Psoas muscle (tissue), 8 donors: ENCODE measurements at regions of chr2 and their contacts with region 1.

Region 1: GRCh38 chr2:204691911-204692510 is 146.7 kb downstream of the PARD3B start:
- DNase-seq: no peak
- ATAC-seq: peak; percentile 86 to 98 (median 91)
- H3K4me3 ChIP-seq: no peak overlapping the region
- H3K27ac ChIP-seq: no peak overlapping the region
- H3K4me1 ChIP-seq: peaks cover 12% of the 10 kb centered on the region
- H3K27me3 ChIP-seq: no peaks in the 10 kb centered on the region
- CTCF ChIP-seq: peak; percentile 80

Region 2: DNA sequence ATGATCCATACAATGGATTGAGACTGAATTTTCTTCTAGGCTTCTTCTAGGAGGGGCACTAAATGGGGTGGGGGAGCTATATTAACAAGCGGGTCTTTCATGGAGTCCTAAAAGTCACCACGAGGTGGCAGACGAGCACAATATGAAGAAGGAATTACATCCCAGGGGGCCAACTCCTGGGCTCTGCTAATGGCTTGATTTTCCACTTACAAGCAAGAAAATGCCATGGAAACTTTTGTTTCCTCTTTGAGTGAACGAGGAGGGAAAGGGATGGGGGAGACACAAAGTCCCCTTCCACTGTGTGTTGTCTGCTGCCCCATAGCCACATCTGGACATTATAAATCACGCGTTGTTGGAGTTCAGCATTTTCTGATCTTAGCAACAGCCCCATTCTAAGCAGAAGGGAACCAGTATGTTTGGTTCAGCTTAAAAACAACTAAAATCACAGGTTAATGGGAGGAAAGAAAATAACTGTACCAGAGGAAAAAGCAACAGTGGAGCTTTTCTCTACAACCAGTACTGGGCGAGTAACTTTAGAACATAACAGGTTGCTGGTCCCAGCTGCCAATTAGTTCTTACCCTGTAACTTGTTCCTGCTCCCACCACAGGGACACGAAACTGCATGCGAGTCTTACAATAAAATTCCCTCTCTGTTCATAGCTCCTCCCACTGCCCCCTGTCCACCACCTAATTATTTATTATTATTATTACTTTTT is 431.7 kb before region 1 on chr2:
- intact Hi-C with region 1: loop called in 1 of 2 experiments (anchors 5 kb)
- DNase-seq: peak; percentile 35 to 57
- ATAC-seq: peak; percentile 54 to 86 (median 64)
- H3K4me3 ChIP-seq: no peak overlapping the region
- H3K27ac ChIP-seq: no peak overlapping the region
- H3K4me1 ChIP-seq: no peaks in the 10 kb centered on the region
- H3K27me3 ChIP-seq: peaks cover 0 to 2% (median 0%) of the 10 kb centered on the region in 3 donors
- CTCF ChIP-seq: peak; percentile 79

Region 3: DNA sequence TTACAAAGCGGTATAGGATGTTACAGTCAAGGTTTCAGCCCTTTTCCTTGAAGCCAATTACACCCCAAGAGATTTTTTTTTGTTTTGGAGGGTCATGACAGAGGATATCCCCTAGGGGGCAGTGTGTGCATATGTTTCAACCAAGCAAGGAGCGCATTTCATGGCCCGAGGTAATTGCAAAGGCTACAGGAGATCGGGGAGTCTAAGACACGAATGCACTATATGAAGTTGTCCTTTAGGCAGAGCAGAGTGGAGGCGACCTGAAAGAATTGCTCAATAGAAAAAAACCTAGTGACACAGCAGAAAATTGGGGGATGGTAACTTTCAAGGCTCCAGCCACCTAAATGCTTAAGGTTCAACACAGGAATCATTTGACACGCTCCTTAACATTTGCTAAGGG is 366.5 kb before region 1 on chr2:
- intact Hi-C with region 1: loop called (anchors 2 kb)
- DNase-seq: no peak
- ATAC-seq: peak; percentile 72 to 85 (median 80)
- H3K4me3 ChIP-seq: no peak overlapping the region
- H3K27ac ChIP-seq: no peak overlapping the region
- H3K4me1 ChIP-seq: peaks cover 15% of the 10 kb centered on the region
- H3K27me3 ChIP-seq: no peaks in the 10 kb centered on the region
- CTCF ChIP-seq: peak; percentile 89

Region 4: DNA sequence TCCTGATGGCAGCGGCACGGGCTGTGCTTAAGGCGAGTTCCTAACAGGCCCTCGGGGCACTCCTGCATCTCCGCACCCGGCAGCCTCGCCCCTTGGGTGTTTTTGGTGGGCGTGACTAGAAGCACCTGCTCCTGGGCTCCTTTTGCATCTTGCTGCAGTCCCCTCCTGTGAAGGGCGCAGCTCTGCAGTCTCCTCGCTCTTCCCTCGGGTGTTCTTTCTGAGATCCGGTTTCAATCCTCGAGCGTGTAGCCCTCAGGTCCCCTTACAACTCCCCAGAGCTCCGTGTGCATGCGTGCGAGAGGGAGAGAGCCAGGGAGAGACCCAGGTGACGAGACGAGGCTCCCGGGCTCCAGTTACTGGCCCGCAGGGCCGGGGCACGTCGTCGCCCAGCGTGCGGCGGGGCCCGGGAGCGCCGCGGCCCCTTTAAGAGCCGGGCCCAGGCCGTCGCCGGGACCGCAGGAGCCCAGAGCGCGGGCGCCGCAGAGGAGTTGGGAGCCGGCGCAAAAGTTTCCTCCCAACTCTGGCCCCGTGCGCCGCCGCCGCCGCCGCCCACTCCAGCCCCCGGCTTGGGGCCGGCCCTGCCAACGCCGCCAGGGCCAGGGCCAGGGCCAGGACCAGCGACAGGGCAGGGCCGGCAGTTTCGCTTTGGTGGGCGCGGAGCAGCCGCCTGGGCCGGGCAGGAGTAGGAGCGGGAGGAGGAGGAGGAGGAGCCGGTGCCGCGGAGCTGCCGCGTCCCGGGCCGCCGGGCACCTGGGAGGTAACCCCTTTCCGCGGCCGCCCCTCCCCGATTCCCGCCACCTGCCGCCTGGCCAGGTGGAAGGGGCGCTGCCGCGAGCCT is 146.8 kb before region 1 on chr2 and contains the start of gene PARD3B:
- intact Hi-C with region 1: loop called in 1 of 2 experiments (anchors 10 kb)
- DNase-seq: peak; percentile 66 to 78
- ATAC-seq: peak; percentile 94 to 97 (median 96)
- H3K4me3 ChIP-seq: peak within 1 kb of the TSS; percentile 94
- H3K27ac ChIP-seq: peak within 1 kb of the TSS; percentile 70
- H3K4me1 ChIP-seq: peaks cover 13% of the 10 kb centered on the region
- H3K27me3 ChIP-seq: no peaks in the 10 kb centered on the region
- CTCF ChIP-seq: no peak
- total RNA-seq, gene PARD3B: 4.8 to 6.0 (median 5.6) TPM

Region 5: GRCh38 chr2:204860274-204860673 is 168.3 kb after region 1 on chr2:
- intact Hi-C with region 1: loop called in 1 of 2 experiments (anchors 10 kb)
- DNase-seq: peak; percentile 50 to 79
- ATAC-seq: peak; percentile 88 to 100 (median 96)
- H3K4me3 ChIP-seq: peak overlapping the region; percentile 32
- H3K27ac ChIP-seq: peak overlapping the region; percentile 78
- H3K4me1 ChIP-seq: peaks cover 18% of the 10 kb centered on the region
- H3K27me3 ChIP-seq: no peaks in the 10 kb centered on the region
- CTCF ChIP-seq: peak; percentile 29

Region 6: GRCh38 chr2:205680067-205680466 is 988.1 kb after region 1 on chr2:
- intact Hi-C with region 1: loop called in 1 of 2 experiments (anchors 10 kb)
- DNase-seq: no peak
- ATAC-seq: peak in 2 of 4 donors; percentile 40
- H3K4me3 ChIP-seq: no peak overlapping the region
- H3K27ac ChIP-seq: no peak overlapping the region
- H3K4me1 ChIP-seq: no peaks in the 10 kb centered on the region
- H3K27me3 ChIP-seq: peaks cover 7 to 46% (median 8%) of the 10 kb centered on the region in 3 donors
- CTCF ChIP-seq: peak; percentile 51